Cardiac septum (tissue), 1 donor: ENCODE measurements at regions of chr5 and their contacts with region 1.

Region 1: GRCh38 chr5:16616536-16617273 is at the start of gene RETREG1:
- DNase-seq: peak; percentile 87
- total RNA-seq, gene RETREG1: 105 TPM

Region 2: GRCh38 chr5:16574789-16575721 is 41.6 kb before region 1 on chr5:
- intact Hi-C with region 1: loop called (anchors 2 kb)
- DNase-seq: no peak

Region 3: GRCh38 chr5:16736158-16736995 is 119.7 kb after region 1 on chr5:
- intact Hi-C with region 1: no loop called
- DNase-seq: no peak